Tibial artery (tissue), 4 donors: ENCODE measurements at regions of chr17 and their contacts with region 1.

Region 1: DNA sequence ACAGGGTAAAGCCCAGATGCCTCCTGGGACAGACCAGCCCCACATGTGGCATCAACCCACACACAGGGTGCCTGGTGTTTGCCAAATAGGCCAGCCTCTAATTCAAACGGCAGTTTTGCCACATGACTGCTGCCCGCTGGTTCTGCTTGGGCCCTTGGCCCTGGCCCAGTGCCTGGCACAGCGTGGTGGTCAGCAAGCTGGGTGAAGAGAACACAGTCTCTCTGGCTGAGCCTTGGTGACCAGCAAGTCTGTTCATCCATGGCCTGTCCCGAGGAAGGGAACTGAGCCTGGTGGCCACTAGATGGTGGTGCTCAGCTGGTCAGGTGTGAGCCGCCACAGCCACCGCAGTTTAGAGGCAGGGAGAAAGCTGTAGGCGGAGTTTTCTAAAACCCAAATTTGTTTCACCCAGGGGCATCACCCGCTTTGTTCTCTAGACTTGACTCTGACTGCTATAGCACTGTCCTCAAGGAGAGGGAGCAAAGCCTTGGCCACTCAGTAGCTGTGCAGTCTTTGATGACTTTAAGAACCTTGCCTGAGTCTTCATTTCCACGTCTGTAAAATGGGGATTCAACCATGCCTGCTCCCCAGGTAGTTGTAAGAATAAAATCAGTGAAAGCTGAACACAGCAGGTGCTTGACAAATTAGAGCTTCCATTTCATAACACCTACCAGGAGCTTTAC is 4.7 kb upstream of the GFAP start:
- DNase-seq: peak; percentile 86 to 87
- H3K4me3 ChIP-seq: no peak overlapping the region
- H3K27ac ChIP-seq: no peak overlapping the region
- H3K4me1 ChIP-seq: peaks cover 0 to 19% (median 12%) of the 10 kb centered on the region in 4 donors
- H3K27me3 ChIP-seq: no peaks in the 10 kb centered on the region
- CTCF ChIP-seq: peak; percentile 81 to 93

Region 2: DNA sequence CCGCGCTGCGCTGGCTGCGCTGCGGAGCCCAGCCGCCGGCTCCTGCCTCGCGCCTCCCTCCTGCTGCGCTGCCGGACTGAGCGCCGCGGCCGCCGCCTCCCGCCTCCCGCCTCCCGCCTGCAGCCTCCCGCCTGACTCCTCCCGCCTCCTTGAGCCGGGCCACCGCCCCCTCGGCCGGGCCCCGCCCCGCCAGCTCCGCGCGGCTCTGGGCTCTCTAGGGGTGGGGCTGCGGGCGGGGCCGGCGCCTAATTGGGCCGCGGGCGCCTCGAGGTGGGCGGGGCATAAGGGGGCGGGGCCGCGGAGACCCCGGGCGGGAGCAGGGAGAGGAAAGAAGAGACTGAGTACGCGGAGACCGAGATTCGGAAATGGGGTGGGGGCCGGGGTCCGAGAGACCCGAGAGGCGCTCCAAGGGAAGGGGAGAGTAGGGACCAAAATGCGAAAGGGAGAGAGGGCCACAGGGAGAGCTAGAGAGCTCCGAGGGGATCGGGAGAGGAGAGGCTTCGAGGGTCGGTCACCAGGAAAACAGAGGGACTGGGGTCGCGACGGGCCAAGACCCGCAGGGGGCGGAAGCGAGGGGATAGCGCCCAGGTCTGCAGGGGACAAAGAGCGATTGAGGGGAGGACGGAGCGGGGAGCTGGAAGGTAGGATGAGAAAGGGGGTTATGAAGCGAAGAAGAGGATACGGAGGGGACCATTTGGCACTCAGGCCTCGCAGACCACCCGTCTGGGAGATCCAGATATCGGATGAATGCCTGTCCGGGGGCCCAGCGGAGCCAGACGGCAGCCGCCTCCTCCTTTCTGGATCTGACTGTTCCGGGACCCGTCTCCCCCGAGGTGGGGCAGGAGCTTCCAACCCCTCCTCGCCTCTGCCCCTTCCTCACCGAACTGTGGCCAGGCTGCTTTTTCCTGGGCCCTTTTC is 48.5 kb after region 1 on chr17 and contains the start of gene C1QL1:
- intact Hi-C with region 1: no loop called
- DNase-seq: peak; percentile 87 to 94
- H3K4me3 ChIP-seq: peak within 1 kb of the TSS; percentile 44 to 50
- H3K27ac ChIP-seq: no peak within 1 kb of the TSS
- H3K4me1 ChIP-seq: peaks cover 0 to 44% (median 30%) of the 10 kb centered on the region in 4 donors
- H3K27me3 ChIP-seq: peaks cover 10 to 50% of the 10 kb centered on the region in 2 donors
- CTCF ChIP-seq: peak in 1 of 2 experiments; percentile 5

Region 3: GRCh38 chr17:45021607-45022287 is 101.7 kb after region 1 on chr17:
- intact Hi-C with region 1: loop called (anchors 2 kb)
- DNase-seq: peak; percentile 54 to 80
- H3K4me3 ChIP-seq: peak overlapping the region; percentile 45 to 53
- H3K27ac ChIP-seq: peak overlapping the region; percentile 60 to 73
- H3K4me1 ChIP-seq: peaks cover 0 to 45% (median 24%) of the 10 kb centered on the region in 4 donors
- H3K27me3 ChIP-seq: peaks cover 0 to 3% of the 10 kb centered on the region in 2 donors
- CTCF ChIP-seq: peak; percentile 85 to 90

Region 4: DNA sequence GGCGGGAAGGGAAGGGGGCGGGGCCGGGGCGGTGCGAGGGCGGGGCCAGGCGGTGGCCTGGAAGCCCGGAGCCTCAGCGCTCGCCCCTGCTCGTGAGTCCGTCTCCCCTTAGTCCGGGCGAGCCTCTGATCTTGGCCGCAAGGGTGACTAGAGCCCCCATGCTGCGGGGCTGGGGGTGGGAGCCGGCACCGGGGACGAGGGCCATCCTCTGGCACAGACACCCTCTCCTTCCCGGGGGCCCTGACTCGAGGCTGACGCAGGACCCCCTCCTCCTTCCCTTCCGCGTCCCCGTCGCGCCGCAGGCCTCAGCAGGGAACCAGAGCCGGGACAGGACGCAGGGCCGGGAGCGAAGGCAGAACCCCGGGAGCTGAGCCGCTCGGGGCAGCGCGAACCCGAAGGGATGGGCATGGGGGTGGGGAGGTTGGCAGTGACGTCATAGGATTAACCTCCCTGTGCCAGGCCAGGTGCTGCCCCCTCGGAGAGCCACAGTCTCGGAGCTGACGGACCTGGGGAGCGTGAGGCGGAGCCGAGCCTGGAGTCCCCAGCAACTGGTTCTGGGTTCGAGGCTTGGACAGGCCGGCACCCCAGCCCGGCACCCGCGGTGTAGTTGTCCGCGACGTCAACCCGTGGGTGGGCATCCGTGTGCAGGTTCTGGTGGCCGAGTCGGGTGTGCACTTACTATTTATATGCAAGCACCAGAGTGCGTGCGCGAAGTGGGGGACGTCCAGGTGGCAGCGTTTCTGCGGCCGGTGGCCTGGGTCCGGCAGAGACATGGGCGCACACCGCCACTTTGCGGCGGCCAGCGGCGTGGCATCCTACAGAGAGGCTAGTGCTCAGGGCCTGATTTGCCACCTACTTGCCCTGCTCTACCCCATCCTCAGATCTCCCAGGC is 212.8 kb after region 1 on chr17:
- intact Hi-C with region 1: loop called (anchors 5 kb)
- DNase-seq: peak; percentile 88 to 92
- H3K4me3 ChIP-seq: peak overlapping the region; percentile 70 to 94
- H3K27ac ChIP-seq: peak overlapping the region; percentile 98 to 99
- H3K4me1 ChIP-seq: peaks cover 6 to 64% (median 52%) of the 10 kb centered on the region in 4 donors
- H3K27me3 ChIP-seq: no peaks in the 10 kb centered on the region
- CTCF ChIP-seq: peak; percentile 88 to 93

Region 5: DNA sequence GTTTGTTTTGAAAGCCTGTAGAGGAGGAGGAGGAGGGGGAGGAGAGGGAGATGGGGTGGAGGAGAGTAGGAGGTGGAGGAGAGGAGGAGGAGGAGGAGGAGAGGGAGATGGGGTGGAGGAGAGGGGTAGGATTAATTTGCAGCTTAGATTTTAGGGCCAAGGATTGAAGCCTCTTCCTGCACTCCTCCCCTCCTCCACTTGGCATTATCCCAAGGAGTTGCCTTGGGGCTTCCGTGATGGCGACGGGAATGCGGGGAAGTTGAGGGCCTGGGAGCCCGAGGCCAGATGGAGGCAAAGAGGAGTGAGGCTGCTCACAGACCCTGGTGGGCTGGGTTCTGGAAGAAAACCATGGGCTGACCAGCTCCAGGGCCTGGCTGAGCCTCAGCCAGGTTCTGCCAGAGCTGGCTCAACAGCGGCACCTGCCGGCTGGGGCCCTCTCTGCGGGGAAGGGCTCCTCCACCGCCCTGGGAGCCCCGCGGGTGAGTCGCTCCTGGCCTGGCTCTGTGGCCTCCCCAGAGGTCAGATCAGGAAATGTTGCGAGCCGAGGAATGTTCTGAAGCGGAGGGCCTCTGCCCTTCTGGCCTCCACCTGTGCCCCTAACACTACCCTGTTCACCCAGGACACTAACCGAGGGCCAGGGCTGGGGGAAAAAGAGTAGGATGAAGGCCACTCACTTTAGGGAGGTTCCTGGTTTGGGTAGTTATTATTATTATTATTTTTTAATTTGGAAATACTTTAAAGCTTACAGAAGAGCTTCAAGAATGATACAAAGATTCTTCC is 277.7 kb after region 1 on chr17:
- intact Hi-C with region 1: loop called (anchors 10 kb)
- DNase-seq: peak; percentile 86 to 93
- H3K4me3 ChIP-seq: no peak overlapping the region
- H3K27ac ChIP-seq: peak overlapping the region; percentile 54 to 55
- H3K4me1 ChIP-seq: peaks cover 0 to 13% (median 8%) of the 10 kb centered on the region in 4 donors
- H3K27me3 ChIP-seq: no peaks in the 10 kb centered on the region
- CTCF ChIP-seq: peak; percentile 99